CD4-positive, alpha-beta memory T cell (primary cell): ENCODE measurements at regions of chr20 and their contacts with region 1.

Region 1: DNA sequence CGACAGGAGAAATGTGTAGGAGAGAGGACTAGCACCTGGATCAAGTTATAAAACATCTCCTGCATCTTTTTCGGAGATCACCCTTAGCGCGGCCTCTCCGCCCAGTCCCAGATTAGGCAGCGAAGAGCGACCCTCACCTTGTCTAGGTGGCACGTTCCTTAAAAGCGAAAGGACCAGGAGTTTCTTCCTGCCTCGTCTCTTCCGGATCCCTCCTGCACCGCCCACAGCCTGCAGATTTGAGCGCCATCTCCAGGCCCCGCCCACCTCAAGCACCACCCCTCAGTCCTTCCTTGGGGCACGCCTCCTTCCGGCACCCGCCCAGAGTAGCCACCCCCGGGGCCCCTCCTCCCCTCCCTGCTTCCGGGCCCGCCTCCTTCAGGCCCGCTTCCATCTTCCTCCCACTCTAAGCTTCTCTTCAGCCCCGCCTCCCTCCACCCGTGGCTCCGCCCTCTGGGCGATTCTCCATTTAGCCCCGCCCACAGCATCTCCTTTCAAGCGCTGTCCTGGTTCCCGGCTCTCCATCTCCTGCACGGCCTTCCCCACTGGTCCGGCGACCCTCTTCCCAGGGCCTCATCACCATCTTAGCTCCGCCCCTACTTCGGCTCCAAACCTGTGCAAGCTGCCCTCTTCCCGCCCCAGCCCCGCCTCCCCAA is 662 bp upstream of the RALY start:
- DNase-seq: peak; percentile 99 to 100 (median 100)
- H3K4me3 ChIP-seq: peak overlapping the region; percentile 77 to 89
- H3K4me3 Mint-ChIP-seq: peak overlapping the region; percentile 96 to 99 (median 98)
- H3K27ac ChIP-seq: peak overlapping the region; percentile 94
- H3K27ac Mint-ChIP-seq: peak overlapping the region; percentile 99 to 100 (median 99)
- H3K4me1 ChIP-seq: peaks cover 58% of the 10 kb centered on the region
- H3K4me1 Mint-ChIP-seq: peaks cover 41 to 72% (median 53%) of the 10 kb centered on the region in 4 donors
- H3K27me3 ChIP-seq: no peaks in the 10 kb centered on the region
- H3K27me3 Mint-ChIP-seq: peaks cover 0 to 2% of the 10 kb centered on the region in 2 donors

Region 2: GRCh38 chr20:33489495-33490022 is 503.5 kb before region 1 on chr20:
- CTCF ChIA-PET with region 1: no interaction called
- POLR2A ChIA-PET with region 1: interaction called, 10 read pairs
- intact Hi-C with region 1: no loop called
- DNase-seq: peak; percentile 98 to 99 (median 99)
- H3K4me3 ChIP-seq: peak overlapping the region; percentile 61 to 70
- H3K4me3 Mint-ChIP-seq: peak overlapping the region; percentile 81 to 96 (median 86)
- H3K27ac ChIP-seq: peak overlapping the region; percentile 89
- H3K27ac Mint-ChIP-seq: peak overlapping the region; percentile 92 to 95 (median 94)
- H3K4me1 ChIP-seq: peaks cover 16% of the 10 kb centered on the region
- H3K4me1 Mint-ChIP-seq: peaks cover 8 to 24% (median 18%) of the 10 kb centered on the region in 4 donors
- H3K27me3 ChIP-seq: no peaks in the 10 kb centered on the region
- H3K27me3 Mint-ChIP-seq: no peaks in the 10 kb centered on the region

Region 3: GRCh38 chr20:33862709-33863403 is 130.2 kb before region 1 on chr20:
- CTCF ChIA-PET with region 1: no interaction called
- POLR2A ChIA-PET with region 1: interaction called, 11 read pairs
- intact Hi-C with region 1: no loop called
- DNase-seq: peak in 3 of 5 donors; percentile 24 to 39 (median 28)
- H3K4me3 ChIP-seq: no peak overlapping the region
- H3K4me3 Mint-ChIP-seq: peak overlapping the region in 1 of 8 donors; percentile 27
- H3K27ac ChIP-seq: no peak overlapping the region
- H3K27ac Mint-ChIP-seq: no peak overlapping the region
- H3K4me1 ChIP-seq: peaks cover 30% of the 10 kb centered on the region
- H3K4me1 Mint-ChIP-seq: peaks cover 15 to 26% (median 21%) of the 10 kb centered on the region in 4 donors
- H3K27me3 ChIP-seq: no peaks in the 10 kb centered on the region
- H3K27me3 Mint-ChIP-seq: no peaks in the 10 kb centered on the region

Region 4: DNA sequence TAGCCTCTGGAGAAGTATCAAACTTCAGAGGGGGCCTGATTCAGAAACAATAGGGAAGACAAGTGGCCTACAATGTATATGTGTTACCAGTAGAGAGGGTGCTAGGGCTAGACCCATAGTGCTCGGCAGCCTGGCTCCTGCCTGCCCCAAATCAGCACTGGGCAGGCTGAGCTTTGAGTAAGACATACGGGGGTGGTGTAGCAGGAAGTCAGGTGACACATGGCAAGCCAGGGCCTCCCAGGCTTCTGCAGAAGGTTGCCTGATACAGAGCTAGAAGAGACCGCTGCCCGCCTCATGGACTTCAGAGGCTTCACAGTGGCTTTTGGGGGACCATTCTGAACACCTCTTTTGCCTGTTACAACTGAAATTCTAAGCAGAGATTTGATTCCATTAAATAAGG is 44.1 kb after region 1 on chr20:
- CTCF ChIA-PET with region 1: no interaction called
- POLR2A ChIA-PET with region 1: interaction called, 6 read pairs
- intact Hi-C with region 1: loop called (anchors 5 kb)
- DNase-seq: peak; percentile 23 to 58 (median 35)
- H3K4me3 ChIP-seq: no peak overlapping the region
- H3K4me3 Mint-ChIP-seq: peak overlapping the region in 7 of 8 donors; percentile 22 to 76 (median 55)
- H3K27ac ChIP-seq: peak overlapping the region; percentile 2
- H3K27ac Mint-ChIP-seq: peak overlapping the region; percentile 5 to 83 (median 58)
- H3K4me1 ChIP-seq: peaks cover 65% of the 10 kb centered on the region
- H3K4me1 Mint-ChIP-seq: peaks cover 71 to 95% (median 82%) of the 10 kb centered on the region in 4 donors
- H3K27me3 ChIP-seq: no peaks in the 10 kb centered on the region
- H3K27me3 Mint-ChIP-seq: no peaks in the 10 kb centered on the region

Region 5: DNA sequence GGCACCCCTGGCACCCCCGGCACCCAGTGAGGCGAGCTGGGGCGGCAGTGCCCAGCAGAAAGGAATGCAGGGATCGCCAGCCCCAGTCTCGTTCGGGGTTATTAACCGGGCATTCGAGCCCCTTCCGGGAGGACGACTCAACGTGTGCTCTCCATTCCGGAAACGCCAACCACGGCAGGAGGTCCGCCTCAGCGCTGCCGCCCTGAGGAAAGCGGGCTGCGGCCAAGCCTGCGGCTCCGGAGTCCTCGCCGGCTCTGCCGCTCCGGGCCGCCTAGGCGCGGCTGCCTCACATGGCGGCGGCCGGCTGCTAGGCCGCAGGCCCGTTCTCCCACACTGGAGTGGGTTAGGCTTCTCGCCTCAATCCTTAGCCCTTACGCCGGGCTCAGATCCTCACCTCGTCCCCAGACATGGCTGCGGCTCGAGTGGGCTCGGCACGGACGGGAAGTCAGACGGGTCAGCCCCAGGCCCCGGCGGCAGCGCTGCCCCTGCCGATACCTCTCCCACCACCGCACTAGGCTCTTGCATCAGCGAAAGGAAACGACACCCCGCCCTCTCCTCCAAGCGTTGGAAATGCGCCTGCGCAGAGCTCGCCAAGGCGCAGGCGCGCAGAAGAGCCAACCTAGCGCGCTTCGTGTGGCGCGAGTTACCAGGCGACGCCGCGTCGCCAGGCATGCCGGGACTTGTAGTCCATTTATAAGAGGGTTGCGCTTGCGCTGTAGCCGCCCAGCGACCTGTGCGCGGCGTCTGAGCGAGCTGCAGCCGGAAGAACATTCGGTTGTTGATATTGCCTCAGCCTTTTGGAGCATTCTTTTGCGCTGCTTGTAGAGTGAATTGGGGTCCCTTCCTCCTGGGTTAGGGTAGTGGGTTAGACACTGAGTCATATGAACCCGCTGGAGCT is 118.9 kb after region 1 on chr20 and contains the start of gene EIF2S2:
- CTCF ChIA-PET with region 1: no interaction called
- POLR2A ChIA-PET with region 1: interaction called, 71 read pairs
- intact Hi-C with region 1: loop called (anchors 1 kb)
- DNase-seq: peak; percentile 93 to 97 (median 97)
- H3K4me3 ChIP-seq: peak within 1 kb of the TSS; percentile 92 to 94
- H3K4me3 Mint-ChIP-seq: peak within 1 kb of the TSS; percentile 90 to 99 (median 94)
- H3K27ac ChIP-seq: peak within 1 kb of the TSS; percentile 95
- H3K27ac Mint-ChIP-seq: peak within 1 kb of the TSS; percentile 91 to 99 (median 96)
- H3K4me1 ChIP-seq: peaks cover 47% of the 10 kb centered on the region
- H3K4me1 Mint-ChIP-seq: peaks cover 32 to 52% (median 40%) of the 10 kb centered on the region in 4 donors
- H3K27me3 ChIP-seq: no peaks in the 10 kb centered on the region
- H3K27me3 Mint-ChIP-seq: no peaks in the 10 kb centered on the region
- total RNA-seq, gene EIF2S2: 52.2 to 53.1 TPM